CD4-positive, alpha-beta T cell (primary cell): ENCODE measurements at regions of chr1 and their contacts with region 1.

Region 1: DNA sequence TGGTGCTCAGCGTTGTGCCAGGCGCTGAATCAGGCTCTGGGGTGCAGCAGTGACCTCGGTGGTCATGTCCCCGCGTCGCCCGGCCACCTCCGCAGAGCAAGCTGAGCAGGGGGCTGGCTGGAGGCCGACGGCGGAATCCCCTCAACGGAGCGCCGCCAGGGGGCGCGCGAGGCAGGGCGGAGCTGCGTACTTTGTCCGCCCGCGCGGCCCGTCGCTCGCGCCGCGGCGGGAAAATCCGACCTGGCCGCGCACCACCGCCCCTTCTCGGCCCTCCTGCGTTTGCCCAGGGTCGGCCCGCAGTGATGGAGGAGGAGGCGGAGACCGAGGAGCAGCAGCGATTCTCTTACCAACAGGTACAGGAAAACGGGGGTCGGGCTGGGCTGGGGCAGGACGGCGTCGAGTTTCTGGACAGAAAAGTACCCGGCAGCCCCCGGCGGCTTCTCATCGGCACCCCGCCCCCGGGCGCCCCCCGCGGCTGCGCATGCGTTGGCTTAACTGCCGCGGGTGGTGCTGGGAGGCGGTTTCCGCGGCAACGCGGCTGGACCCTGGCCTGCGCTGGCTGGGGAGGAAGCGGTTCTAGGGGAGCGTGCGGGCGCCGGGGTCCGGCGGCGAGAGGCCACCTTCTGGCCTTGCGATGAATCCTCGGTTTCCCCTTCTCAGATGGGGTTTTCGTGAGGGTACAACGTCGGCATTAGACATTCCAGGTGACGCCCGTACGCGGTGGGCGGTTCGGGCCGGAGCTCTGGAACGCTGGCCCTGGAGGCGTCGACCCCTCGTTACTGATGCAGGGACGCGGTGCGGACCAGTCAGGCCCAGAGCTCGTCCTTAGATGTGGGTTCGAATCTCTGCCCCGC is at the start of gene CENPS:
- DNase-seq: peak; percentile 72 to 95 (median 90)
- ATAC-seq: peak; percentile 79
- H3K4me3 ChIP-seq: peak within 1 kb of the TSS; percentile 71
- H3K4me3 Mint-ChIP-seq: peak within 1 kb of the TSS; percentile 94
- H3K27ac ChIP-seq: peak within 1 kb of the TSS; percentile 65 to 68
- H3K27ac Mint-ChIP-seq: peak within 1 kb of the TSS; percentile 92
- H3K4me1 ChIP-seq: peaks cover 26% of the 10 kb centered on the region
- H3K4me1 Mint-ChIP-seq: peaks cover 23% of the 10 kb centered on the region
- H3K27me3 ChIP-seq: no peaks in the 10 kb centered on the region
- H3K27me3 Mint-ChIP-seq: no peaks in the 10 kb centered on the region
- CTCF ChIP-seq: peak; percentile 98
- total RNA-seq, gene CENPS: 3.7 to 4.0 TPM

Region 2: GRCh38 chr1:9784508-9785133 is 645.8 kb before region 1 on chr1:
- CTCF ChIA-PET with region 1: no interaction called
- POLR2A ChIA-PET with region 1: no interaction called
- intact Hi-C with region 1: loop called in 1 of 2 experiments (anchors 5 kb)
- DNase-seq: peak; percentile 39 to 86 (median 58)
- ATAC-seq: peak; percentile 45
- H3K4me3 ChIP-seq: no peak overlapping the region
- H3K4me3 Mint-ChIP-seq: peak overlapping the region; percentile 62
- H3K27ac ChIP-seq: no peak overlapping the region
- H3K27ac Mint-ChIP-seq: peak overlapping the region; percentile 79
- H3K4me1 ChIP-seq: peaks cover 21% of the 10 kb centered on the region
- H3K4me1 Mint-ChIP-seq: peaks cover 36% of the 10 kb centered on the region
- H3K27me3 ChIP-seq: no peaks in the 10 kb centered on the region
- H3K27me3 Mint-ChIP-seq: no peaks in the 10 kb centered on the region
- CTCF ChIP-seq: peak; percentile 83

Region 3: GRCh38 chr1:9942939-9943788 is 487.3 kb before region 1 on chr1 and contains the starts of genes LZIC and NMNAT1:
- CTCF ChIA-PET with region 1: no interaction called
- POLR2A ChIA-PET with region 1: no interaction called
- intact Hi-C with region 1: loop called in 1 of 2 experiments (anchors 2 kb)
- DNase-seq: peak; percentile 76 to 94 (median 85)
- ATAC-seq: peak; percentile 92
- H3K4me3 ChIP-seq: peak within 1 kb of the TSS; percentile 99
- H3K4me3 Mint-ChIP-seq: peak within 1 kb of the TSS; percentile 98
- H3K27ac ChIP-seq: peak within 1 kb of the TSS; percentile 73 to 90
- H3K27ac Mint-ChIP-seq: peak within 1 kb of the TSS; percentile 91
- H3K4me1 ChIP-seq: peaks cover 23% of the 10 kb centered on the region
- H3K4me1 Mint-ChIP-seq: peaks cover 20% of the 10 kb centered on the region
- H3K27me3 ChIP-seq: no peaks in the 10 kb centered on the region
- H3K27me3 Mint-ChIP-seq: no peaks in the 10 kb centered on the region
- CTCF ChIP-seq: no peak
- total RNA-seq, gene LZIC: 16.0 to 18.1 TPM
- total RNA-seq, gene NMNAT1: 0.66 to 1.0 TPM

Region 4: GRCh38 chr1:10378081-10378841 is 52.2 kb before region 1 on chr1:
- CTCF ChIA-PET with region 1: no interaction called
- POLR2A ChIA-PET with region 1: no interaction called
- intact Hi-C with region 1: loop called (anchors 1 kb)
- DNase-seq: peak in 3 of 14 experiments; percentile 14 to 61 (median 48)
- ATAC-seq: no peak
- H3K4me3 ChIP-seq: no peak overlapping the region
- H3K4me3 Mint-ChIP-seq: no peak overlapping the region
- H3K27ac ChIP-seq: no peak overlapping the region
- H3K27ac Mint-ChIP-seq: no peak overlapping the region
- H3K4me1 ChIP-seq: no peaks in the 10 kb centered on the region
- H3K4me1 Mint-ChIP-seq: no peaks in the 10 kb centered on the region
- H3K27me3 ChIP-seq: no peaks in the 10 kb centered on the region
- H3K27me3 Mint-ChIP-seq: no peaks in the 10 kb centered on the region
- CTCF ChIP-seq: no peak

Region 5: DNA sequence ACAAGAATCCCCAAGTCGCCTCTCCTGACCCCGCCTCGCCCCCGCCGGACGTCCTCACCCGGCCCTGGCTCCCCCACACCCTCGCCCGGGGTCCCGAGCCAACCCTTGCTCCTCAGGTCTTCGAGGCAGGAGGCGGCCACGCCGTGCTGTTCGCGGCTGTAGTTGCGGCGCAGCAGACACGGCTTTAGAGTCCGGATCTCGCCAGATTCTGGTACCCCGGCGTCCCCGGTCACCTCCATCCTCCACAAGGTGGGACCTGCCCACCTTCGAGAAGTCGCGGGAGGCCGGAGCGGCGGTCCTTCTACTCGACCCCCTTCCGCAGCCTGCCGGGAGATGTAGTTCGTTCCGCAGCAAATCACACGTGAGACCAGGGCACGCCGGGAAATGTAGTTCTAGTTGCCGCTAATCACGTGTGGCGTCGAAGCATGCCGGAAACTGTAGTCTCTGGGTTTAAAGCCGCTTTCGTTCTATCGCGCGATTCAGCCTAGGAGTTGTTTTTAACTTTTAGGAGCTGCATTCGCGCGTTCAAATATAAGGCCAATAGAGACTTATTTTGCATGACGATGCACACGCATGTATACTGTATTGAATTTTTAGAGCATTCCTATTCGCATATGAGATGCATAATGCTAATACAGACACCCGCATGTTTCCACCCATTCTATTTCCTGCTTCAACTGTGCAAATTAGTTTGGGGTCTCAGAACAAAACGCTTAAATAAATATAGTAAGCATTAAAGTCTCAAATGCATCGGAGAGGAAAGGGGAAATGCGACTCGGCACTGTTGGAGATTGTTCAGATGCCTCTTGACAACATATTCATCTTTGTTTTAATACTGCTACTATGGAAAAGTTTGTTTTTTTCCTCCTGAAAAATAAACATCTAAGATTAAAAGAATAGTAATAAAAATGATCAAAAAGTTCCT is 42.0 kb after region 1 on chr1 and contains the start of gene DFFA:
- CTCF ChIA-PET with region 1: interaction called, 6 read pairs
- POLR2A ChIA-PET with region 1: interaction called, 7 read pairs
- intact Hi-C with region 1: loop called in 1 of 2 experiments (anchors 1 kb)
- DNase-seq: peak; percentile 77 to 96 (median 87)
- ATAC-seq: peak; percentile 83
- H3K4me3 ChIP-seq: peak within 1 kb of the TSS; percentile 79
- H3K4me3 Mint-ChIP-seq: peak within 1 kb of the TSS; percentile 89
- H3K27ac ChIP-seq: peak within 1 kb of the TSS; percentile 27 to 38
- H3K27ac Mint-ChIP-seq: peak within 1 kb of the TSS; percentile 75
- H3K4me1 ChIP-seq: peaks cover 45% of the 10 kb centered on the region
- H3K4me1 Mint-ChIP-seq: peaks cover 50% of the 10 kb centered on the region
- H3K27me3 ChIP-seq: no peaks in the 10 kb centered on the region
- H3K27me3 Mint-ChIP-seq: no peaks in the 10 kb centered on the region
- CTCF ChIP-seq: no peak
- total RNA-seq, gene DFFA: 7.4 to 9.1 TPM